ENCODE measurements at regions of chr2 and their contacts with region 1.

Region 1: DNA sequence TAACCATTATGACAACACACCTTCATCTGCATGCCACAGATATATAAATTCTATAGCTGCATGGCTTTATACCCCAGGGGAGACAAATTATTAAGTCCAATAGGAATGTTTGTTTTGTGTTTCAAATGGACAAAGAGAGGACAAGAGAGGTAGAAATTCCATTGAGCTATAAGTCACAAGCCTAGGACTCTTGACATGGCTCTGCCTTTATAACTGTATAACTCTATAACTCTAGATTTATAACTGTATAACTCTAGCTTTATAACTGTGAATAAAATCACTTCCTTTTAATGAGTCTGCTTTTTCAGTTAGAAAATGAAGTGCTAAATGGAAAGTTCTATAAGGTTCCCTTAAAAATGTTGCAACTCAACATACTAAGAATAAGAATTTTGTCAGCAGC is 106.4 kb downstream of the SCN9A start:
- DNase-seq: no peak
- H3K4me3 Mint-ChIP-seq: no peak overlapping the region
- H3K27ac Mint-ChIP-seq: no peak overlapping the region
- H3K4me1 Mint-ChIP-seq: no peaks in the 10 kb centered on the region
- H3K27me3 Mint-ChIP-seq: no peaks in the 10 kb centered on the region

Region 2: GRCh38 chr2:166297951-166298350 is 28.6 kb after region 1 on chr2:
- CTCF ChIA-PET with region 1: no interaction called
- POLR2A ChIA-PET with region 1: no interaction called
- intact Hi-C with region 1: loop called (anchors 1 kb)
- DNase-seq: no peak
- H3K4me3 Mint-ChIP-seq: no peak overlapping the region
- H3K27ac Mint-ChIP-seq: no peak overlapping the region
- H3K4me1 Mint-ChIP-seq: no peaks in the 10 kb centered on the region
- H3K27me3 Mint-ChIP-seq: no peaks in the 10 kb centered on the region

Measured in activated CD4-positive, alpha-beta memory T cell treated with anti-CD3 and anti-CD28 coated beads for 36 hours (primary cell).